Gastrocnemius medialis (tissue), 4 donors: ENCODE measurements at regions of chr15 and their contacts with region 1.

Region 1: DNA sequence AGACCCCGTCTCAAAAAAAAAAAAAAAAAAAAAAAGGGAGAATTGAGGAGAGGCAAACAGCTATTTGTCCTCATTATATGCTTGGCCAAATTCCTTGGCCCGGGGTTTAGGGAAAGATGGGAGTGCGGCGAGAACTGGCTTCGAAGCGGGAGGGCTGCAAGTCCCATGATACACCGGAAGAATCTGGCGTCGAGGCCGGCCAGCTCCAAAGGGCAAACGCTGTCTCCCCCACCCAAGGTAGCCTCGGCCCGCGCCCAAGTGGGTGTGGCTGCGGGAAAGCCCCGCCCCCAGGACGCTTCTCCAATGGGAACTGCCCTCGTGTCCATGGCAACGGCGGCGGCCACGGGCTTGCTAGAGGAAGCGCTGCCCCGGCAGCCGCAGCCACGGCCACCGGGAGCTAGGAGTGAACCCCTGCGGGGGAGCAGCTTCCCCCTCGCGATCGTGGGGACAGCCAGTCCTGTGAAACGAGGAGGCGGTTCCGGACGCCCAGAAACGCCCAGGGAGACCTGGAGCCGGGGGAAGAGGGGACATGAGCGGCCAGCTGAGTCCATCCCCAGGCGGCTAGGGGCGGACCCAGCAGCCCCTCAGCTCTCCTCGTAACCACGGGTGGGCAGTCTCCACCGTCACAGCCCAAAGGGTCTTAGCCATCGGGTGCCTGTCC is at the start of gene TTLL13:
- DNase-seq: peak; percentile 83
- ATAC-seq: peak; percentile 88 to 93
- H3K4me3 ChIP-seq: peak within 1 kb of the TSS; percentile 63 to 87 (median 72)
- H3K27ac ChIP-seq: peak within 1 kb of the TSS in 2 of 4 donors; percentile 2 to 46
- H3K4me1 ChIP-seq: peaks cover 4 to 9% of the 10 kb centered on the region in 2 donors
- H3K27me3 ChIP-seq: no peaks in the 10 kb centered on the region
- CTCF ChIP-seq: no peak
- POLR2A ChIP-seq: peak in 1 of 2 donors; percentile 26
- total RNA-seq, gene TTLL13: not detected

Region 2: GRCh38 chr15:90201130-90201949 is 48.0 kb before region 1 on chr15 and contains the start of gene SEMA4B:
- in situ Hi-C with region 1: no loop called
- intact Hi-C with region 1: no loop called
- DNase-seq: peak; percentile 23 to 41
- ATAC-seq: peak; percentile 75 to 82
- H3K4me3 ChIP-seq: peak within 1 kb of the TSS; percentile 62 to 91 (median 74)
- H3K27ac ChIP-seq: peak within 1 kb of the TSS; percentile 47 to 70 (median 60)
- H3K4me1 ChIP-seq: peaks cover 9 to 13% of the 10 kb centered on the region in 2 donors
- H3K27me3 ChIP-seq: no peaks in the 10 kb centered on the region
- CTCF ChIP-seq: peak in 1 of 5 experiments; percentile 19
- POLR2A ChIP-seq: peak in 1 of 2 donors; percentile 16
- total RNA-seq, gene SEMA4B: 2.1 to 12.1 (median 6.4) TPM

Region 3: GRCh38 chr15:90265271-90266060 is 16.1 kb after region 1 on chr15 and contains the start of gene NGRN:
- in situ Hi-C with region 1: no loop called
- intact Hi-C with region 1: loop called (anchors 2 kb)
- DNase-seq: peak; percentile 89 to 90
- ATAC-seq: peak; percentile 92 to 94
- H3K4me3 ChIP-seq: peak within 1 kb of the TSS; percentile 68 to 94 (median 82)
- H3K27ac ChIP-seq: peak within 1 kb of the TSS; percentile 95 to 100 (median 96)
- H3K4me1 ChIP-seq: peaks cover 46 to 54% of the 10 kb centered on the region in 2 donors
- H3K27me3 ChIP-seq: no peaks in the 10 kb centered on the region
- CTCF ChIP-seq: no peak
- POLR2A ChIP-seq: peak; percentile 93 to 94
- total RNA-seq, gene NGRN: 160 to 323 (median 274) TPM